Prostate gland (tissue), 2 donors: ENCODE measurements at regions of chr12 and their contacts with region 1.

Region 1: GRCh38 chr12:60106214-60106613 is 510.4 kb downstream of the SLC16A7 start:
- DNase-seq: no peak
- H3K4me3 ChIP-seq: no peak overlapping the region
- H3K27ac ChIP-seq: no peak overlapping the region
- H3K4me1 ChIP-seq: no peaks in the 10 kb centered on the region
- H3K27me3 ChIP-seq: no peaks in the 10 kb centered on the region
- CTCF ChIP-seq: no peak
- POLR2A ChIP-seq: no peak

Region 2: DNA sequence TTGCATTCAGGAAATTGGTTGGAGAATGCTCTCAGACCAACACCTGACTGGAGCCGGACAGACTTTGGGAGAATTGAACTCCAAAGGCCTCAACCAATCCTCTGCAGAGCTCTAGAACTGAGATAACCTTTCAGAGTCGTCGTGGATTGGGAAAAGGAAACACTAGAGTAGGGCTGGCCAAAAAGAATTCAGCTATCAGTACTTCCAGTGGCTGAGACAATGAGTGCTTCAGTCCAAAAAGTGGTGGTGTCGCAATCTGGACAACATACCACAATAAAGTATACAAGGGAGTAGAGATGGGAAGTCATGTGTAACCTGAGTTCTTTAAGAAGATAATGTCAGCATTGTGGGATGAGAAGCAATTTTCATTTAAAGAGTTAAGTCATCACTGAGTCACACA is 133.3 kb before region 1 on chr12:
- intact Hi-C with region 1: no loop called
- DNase-seq: no peak
- H3K4me3 ChIP-seq: no peak overlapping the region
- H3K27ac ChIP-seq: no peak overlapping the region
- H3K4me1 ChIP-seq: no peaks in the 10 kb centered on the region
- H3K27me3 ChIP-seq: no peaks in the 10 kb centered on the region
- CTCF ChIP-seq: no peak
- POLR2A ChIP-seq: no peak

Region 3: DNA sequence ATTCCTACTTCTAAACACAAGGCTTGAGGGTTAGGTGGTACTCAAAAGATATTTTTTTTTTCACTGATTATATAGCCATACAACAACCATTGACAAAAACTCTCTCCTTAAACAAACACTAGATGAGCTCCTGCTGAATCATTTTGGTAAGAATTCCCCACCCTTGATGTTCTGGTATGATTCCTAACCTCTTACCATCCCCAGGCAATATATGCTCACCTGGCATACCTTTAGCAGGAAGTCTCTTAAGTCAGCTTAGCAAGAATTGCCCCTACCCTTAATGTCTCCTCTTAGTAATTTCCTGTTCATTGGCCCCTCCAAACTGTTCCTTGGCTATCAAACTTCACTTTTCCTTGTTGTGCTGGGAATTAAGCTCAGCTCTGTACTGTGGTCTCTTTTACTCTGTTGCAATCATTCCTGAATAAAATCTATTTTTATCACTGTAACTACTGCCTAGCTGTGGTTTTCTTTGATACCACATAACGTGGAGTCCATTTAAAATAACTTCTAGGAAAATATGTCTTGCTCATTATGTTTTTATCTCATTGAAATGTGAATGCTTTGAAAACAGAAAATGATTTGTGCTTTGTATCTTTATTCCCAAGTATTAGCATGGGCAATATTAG is 202.3 kb after region 1 on chr12:
- intact Hi-C with region 1: no loop called
- DNase-seq: no peak
- H3K4me3 ChIP-seq: no peak overlapping the region
- H3K27ac ChIP-seq: no peak overlapping the region
- H3K4me1 ChIP-seq: no peaks in the 10 kb centered on the region
- H3K27me3 ChIP-seq: no peaks in the 10 kb centered on the region
- CTCF ChIP-seq: no peak
- POLR2A ChIP-seq: no peak

Region 4: DNA sequence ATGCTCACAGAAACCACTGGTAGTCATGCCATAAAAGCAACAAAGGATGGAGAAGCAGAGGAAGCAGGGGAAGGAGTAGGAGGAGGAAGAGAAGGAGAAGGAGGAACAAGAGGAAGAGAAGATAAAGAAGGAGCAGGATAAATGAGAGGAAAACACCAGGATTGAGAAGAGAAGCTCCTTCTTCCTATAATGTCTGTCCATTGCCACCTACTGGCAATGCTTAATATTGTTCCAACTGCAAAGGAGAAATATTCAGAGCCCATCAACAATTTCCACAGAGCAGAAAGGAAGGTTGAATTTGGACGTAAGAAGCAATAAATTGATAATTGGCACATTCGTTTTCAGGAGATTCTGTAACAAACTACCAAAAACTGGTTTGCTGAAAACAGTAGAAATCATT is 388.0 kb after region 1 on chr12:
- intact Hi-C with region 1: loop called (anchors 10 kb)
- DNase-seq: no peak
- H3K4me3 ChIP-seq: no peak overlapping the region
- H3K27ac ChIP-seq: no peak overlapping the region
- H3K4me1 ChIP-seq: no peaks in the 10 kb centered on the region
- H3K27me3 ChIP-seq: no peaks in the 10 kb centered on the region
- CTCF ChIP-seq: peak in 2 of 4 experiments; percentile 15 to 32
- POLR2A ChIP-seq: no peak